ENCODE measurements at regions of chr11 and their contacts with region 1.

Region 1: GRCh38 chr11:62400760-62401159 is 18.1 kb upstream of the SCGB1A1 start:
- DNase-seq: peak; percentile 36
- H3K4me3 ChIP-seq: no peak overlapping the region
- CTCF ChIP-seq: no peak

Region 2: DNA sequence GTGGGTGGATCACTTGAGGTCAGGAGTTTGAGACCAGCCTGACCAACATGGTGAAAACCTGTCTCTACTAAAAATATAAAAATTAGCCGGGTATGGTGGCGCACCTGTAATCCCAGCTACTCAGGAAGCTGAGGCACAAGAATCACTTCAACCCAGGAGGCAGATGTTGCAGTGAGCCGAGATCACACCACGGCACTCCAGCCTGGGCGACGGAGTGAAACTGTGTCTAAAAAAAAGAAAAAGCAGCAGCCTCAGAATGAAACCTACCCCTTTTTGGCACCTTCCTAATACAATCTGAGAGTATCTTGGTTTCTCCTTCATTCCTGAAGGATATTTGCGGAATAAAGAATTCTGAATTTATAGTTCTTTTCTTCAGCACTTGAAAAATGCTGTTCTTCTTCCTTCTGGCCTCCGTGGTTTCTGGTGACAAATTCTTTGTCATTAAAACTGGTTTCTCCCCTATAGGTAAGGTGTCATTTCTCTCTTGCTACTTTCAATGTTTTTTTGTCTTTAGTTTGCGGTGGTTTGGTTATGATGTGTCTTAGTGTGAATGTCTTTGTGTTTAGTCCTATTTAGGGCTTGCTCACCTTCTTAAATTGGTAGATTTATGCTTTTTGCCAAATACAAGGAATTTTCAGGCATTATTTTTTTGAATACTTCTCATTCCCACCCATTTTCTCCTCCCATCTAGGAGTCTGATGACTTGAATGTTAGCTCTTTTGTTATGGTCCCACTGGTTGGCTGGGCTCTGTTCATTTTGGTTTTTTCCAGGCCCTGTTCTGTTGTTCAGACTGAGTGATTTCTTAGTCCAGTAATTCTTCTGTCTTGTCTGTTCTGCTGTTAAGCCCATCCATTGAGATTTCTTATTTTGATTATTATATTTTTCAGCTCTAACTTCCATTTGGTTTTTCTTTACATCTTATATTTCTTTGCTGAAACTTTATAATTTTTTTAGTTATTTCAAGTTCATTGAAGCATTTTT is 48.1 kb before region 1 on chr11:
- CTCF ChIA-PET with region 1: no interaction called
- POLR2A ChIA-PET with region 1: no interaction called
- DNase-seq: no peak
- H3K4me3 ChIP-seq: no peak overlapping the region
- CTCF ChIP-seq: no peak

Region 3: GRCh38 chr11:62542750-62543567 is 142.2 kb after region 1 on chr11:
- CTCF ChIA-PET with region 1: interaction called, 187 read pairs
- POLR2A ChIA-PET with region 1: interaction called, 17 read pairs
- DNase-seq: peak; percentile 28
- H3K4me3 ChIP-seq: peak overlapping the region; percentile 98
- CTCF ChIP-seq: peak; percentile 98

Region 4: DNA sequence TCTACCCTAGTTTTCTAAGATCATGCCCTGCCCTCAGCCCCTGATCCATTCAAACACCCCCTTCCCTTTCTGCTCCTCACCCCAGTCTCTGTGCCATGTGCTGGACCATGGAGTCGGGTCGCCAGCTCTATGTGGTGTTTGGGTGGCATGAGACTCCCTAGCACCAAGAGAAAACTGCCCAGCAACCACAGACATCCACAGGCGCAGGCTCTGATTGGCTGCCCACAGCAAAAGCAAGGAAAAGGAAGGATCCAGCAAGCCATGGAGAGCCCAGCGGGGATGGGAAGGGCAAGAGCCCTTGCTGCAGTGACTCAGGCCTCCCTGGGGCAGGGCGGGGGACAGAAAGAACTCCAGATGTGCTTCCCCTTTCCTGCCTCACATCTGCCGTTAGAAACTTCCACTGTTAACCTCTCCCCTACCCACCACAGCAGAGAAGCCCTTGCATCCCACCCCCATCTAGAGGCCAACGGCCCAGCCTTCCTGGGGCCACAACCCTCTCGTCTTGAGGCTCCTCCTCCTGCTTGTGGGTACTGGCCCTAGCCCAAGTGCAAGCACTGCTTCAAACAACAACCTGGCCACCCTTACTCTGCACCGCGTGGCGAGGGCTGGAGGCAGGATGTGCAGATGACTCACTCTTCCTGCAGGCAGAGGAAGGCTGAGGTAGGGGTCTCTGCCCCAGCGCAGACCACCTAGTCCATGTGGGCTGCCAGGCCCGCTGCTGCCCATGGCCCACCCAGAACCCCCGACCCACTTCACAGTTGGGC is 155.5 kb after region 1 on chr11:
- CTCF ChIA-PET with region 1: interaction called, 145 read pairs
- POLR2A ChIA-PET with region 1: interaction called, 12 read pairs
- DNase-seq: peak; percentile 70
- H3K4me3 ChIP-seq: peak overlapping the region; percentile 39
- CTCF ChIP-seq: no peak

Region 5: GRCh38 chr11:62573592-62574362 is 173.0 kb after region 1 on chr11 and contains the start of gene EEF1G:
- CTCF ChIA-PET with region 1: interaction called, 21 read pairs
- POLR2A ChIA-PET with region 1: interaction called, 11 read pairs
- DNase-seq: peak; percentile 99
- H3K4me3 ChIP-seq: peak within 1 kb of the TSS; percentile 97
- CTCF ChIP-seq: no peak

Measured in AG04449 (cell line).